ENCODE measurements at regions of chr10 and their contacts with region 1.

Region 1: GRCh38 chr10:72048450-72049124 is 39.8 kb downstream of the SPOCK2 start:
- DNase-seq: peak; percentile 94
- H3K4me3 ChIP-seq: no peak overlapping the region
- H3K27ac ChIP-seq: no peak overlapping the region
- H3K4me1 ChIP-seq: no peaks in the 10 kb centered on the region
- H3K27me3 ChIP-seq: no peaks in the 10 kb centered on the region
- CTCF ChIP-seq: peak; percentile 96 to 99
- POLR2A ChIP-seq: no peak

Region 2: DNA sequence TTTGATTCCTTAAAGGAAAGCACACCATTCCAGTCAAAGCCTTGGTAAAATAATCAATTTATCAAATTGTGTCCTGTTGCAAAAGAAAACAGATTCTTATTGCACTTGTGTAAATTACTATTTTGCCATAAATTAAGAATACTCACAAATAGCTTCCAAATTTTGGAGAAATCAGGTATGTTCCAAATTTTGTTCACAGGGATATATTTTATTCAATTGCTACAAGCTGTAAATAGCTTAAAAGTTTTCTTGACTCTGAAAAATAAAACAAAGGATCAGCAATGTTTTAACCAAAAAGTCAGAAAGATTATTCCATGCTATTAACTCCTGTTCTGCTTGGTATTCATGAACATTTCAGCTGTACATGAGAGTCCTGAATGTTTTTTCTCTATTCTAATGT is 131.8 kb before region 1 on chr10:
- CTCF ChIA-PET with region 1: interaction called, 25 read pairs
- POLR2A ChIA-PET with region 1: no interaction called
- dilution Hi-C with region 1: no loop called
- intact Hi-C with region 1: no loop called
- DNase-seq: no peak
- H3K4me3 ChIP-seq: no peak overlapping the region
- H3K27ac ChIP-seq: no peak overlapping the region
- H3K4me1 ChIP-seq: no peaks in the 10 kb centered on the region
- H3K27me3 ChIP-seq: no peaks in the 10 kb centered on the region
- CTCF ChIP-seq: no peak
- POLR2A ChIP-seq: no peak

Region 3: GRCh38 chr10:71985542-71986250 is 62.9 kb before region 1 on chr10:
- CTCF ChIA-PET with region 1: interaction called, 16 read pairs
- POLR2A ChIA-PET with region 1: no interaction called
- dilution Hi-C with region 1: no loop called
- intact Hi-C with region 1: no loop called
- DNase-seq: peak; percentile 81
- H3K4me3 ChIP-seq: no peak overlapping the region
- H3K27ac ChIP-seq: no peak overlapping the region
- H3K4me1 ChIP-seq: peaks cover 28% of the 10 kb centered on the region
- H3K27me3 ChIP-seq: no peaks in the 10 kb centered on the region
- CTCF ChIP-seq: no peak
- POLR2A ChIP-seq: no peak

Region 4: DNA sequence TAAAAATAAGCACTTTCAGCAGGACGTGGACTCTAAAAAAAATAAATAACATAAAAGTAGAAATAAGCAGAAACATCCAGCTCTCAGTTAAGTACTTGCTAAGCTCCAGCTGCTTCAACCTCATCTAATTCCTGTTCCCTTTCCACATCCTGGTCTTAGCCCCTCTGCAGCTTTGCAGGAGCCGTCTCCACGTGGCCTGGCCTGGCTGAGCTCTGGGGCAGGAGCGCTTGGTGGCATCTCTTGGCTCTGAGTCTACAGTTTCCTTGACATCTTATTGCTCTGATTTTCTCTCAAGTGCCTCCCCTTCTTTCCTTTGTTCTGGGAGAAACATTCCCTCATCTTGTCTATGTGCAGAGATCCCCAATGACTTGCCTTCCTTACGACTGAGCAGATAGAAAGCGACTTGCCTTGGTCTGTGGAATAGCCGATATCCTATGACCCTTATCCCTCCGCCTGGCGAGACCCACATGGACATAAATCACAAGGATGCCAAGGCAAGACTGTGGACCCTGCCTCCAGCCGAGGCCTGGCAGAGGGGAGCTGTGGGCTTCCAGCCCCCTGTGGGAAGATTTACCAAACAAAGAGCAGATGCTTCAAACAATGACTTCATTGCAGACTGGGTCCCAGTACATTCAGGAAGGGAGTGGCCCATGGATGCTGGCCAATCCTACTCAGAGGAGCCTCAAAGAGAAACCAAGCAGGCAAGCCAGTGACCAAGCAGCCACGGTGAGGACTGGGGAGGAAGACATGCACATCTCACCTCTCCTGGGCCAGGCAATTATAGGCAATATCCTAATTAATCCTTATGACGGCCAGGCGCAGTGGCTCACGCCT is 22.1 kb before region 1 on chr10:
- CTCF ChIA-PET with region 1: interaction called, 29 read pairs
- POLR2A ChIA-PET with region 1: no interaction called
- dilution Hi-C with region 1: no loop called
- intact Hi-C with region 1: no loop called
- DNase-seq: no peak
- H3K4me3 ChIP-seq: no peak overlapping the region
- H3K27ac ChIP-seq: no peak overlapping the region
- H3K4me1 ChIP-seq: peaks cover 1% of the 10 kb centered on the region
- H3K27me3 ChIP-seq: peaks cover 3 to 4% of the 10 kb centered on the region in 2 experiments
- CTCF ChIP-seq: no peak
- POLR2A ChIP-seq: no peak

Region 5: GRCh38 chr10:72079356-72079755 is 30.8 kb after region 1 on chr10:
- CTCF ChIA-PET with region 1: interaction called, 13 read pairs
- POLR2A ChIA-PET with region 1: no interaction called
- dilution Hi-C with region 1: no loop called
- intact Hi-C with region 1: no loop called
- DNase-seq: no peak
- H3K4me3 ChIP-seq: no peak overlapping the region
- H3K27ac ChIP-seq: no peak overlapping the region
- H3K4me1 ChIP-seq: no peaks in the 10 kb centered on the region
- H3K27me3 ChIP-seq: no peaks in the 10 kb centered on the region
- CTCF ChIP-seq: no peak
- POLR2A ChIP-seq: no peak

Region 6: DNA sequence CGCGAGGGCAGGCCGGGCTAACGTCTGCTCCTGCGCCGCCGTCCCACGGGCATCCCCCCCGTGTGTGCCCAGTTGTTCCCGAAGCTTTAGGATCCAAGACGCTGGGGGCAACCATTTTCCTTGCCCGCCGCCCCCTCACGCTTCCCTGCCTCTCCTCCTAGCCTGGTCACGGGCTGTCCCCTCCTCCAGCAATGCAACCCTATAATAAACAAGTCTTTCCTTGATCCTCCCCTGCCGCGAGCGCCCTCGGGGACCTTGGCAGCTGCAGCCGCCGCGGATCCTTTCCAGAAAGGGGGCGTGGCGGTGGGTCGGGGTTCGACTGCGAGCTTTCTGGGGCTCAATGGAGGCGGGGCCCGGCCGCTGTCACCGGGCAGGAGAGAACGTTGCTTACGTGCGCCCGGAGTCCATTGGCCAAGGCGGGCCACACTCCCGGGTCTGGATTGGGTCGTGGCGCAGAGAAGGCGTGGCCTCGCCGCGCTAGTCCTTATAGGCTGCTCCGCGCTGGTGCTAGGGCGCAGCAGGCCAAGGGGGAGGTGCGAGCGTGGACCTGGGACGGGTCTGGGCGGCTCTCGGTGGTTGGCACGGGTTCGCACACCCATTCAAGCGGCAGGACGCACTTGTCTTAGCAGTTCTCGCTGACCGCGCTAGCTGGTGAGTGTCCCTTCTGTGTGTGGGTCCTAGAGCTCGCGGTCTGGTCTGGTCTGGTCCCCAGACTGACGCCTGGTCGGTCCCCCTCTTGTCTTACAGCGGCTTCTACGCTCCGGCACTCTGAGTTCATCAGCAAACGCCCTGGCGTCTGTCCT is 225.0 kb after region 1 on chr10 and contains the start of gene DDIT4:
- CTCF ChIA-PET with region 1: interaction called, 10 read pairs
- POLR2A ChIA-PET with region 1: interaction called, 3 read pairs
- dilution Hi-C with region 1: no loop called
- intact Hi-C with region 1: no loop called
- DNase-seq: peak; percentile 99
- H3K4me3 ChIP-seq: peak within 1 kb of the TSS; percentile 37 to 68 (median 66)
- H3K27ac ChIP-seq: peak within 1 kb of the TSS; percentile 59
- H3K4me1 ChIP-seq: peaks cover 23% of the 10 kb centered on the region
- H3K27me3 ChIP-seq: no peaks in the 10 kb centered on the region
- CTCF ChIP-seq: no peak
- POLR2A ChIP-seq: peak; percentile 100
- total RNA-seq, gene DDIT4: 53.0 and 60.4 TPM in 2 replicates

Region 7: GRCh38 chr10:72625608-72626443 is 577.2 kb after region 1 on chr10 and contains the start of gene MICU1:
- CTCF ChIA-PET with region 1: no interaction called
- POLR2A ChIA-PET with region 1: no interaction called
- dilution Hi-C with region 1: no loop called
- intact Hi-C with region 1: no loop called
- DNase-seq: peak; percentile 97
- H3K4me3 ChIP-seq: peak within 1 kb of the TSS; percentile 60 to 92 (median 83)
- H3K27ac ChIP-seq: peak within 1 kb of the TSS; percentile 61
- H3K4me1 ChIP-seq: peaks cover 11% of the 10 kb centered on the region
- H3K27me3 ChIP-seq: no peaks in the 10 kb centered on the region
- CTCF ChIP-seq: no peak
- POLR2A ChIP-seq: peak; percentile 82
- total RNA-seq, gene MICU1: 42.3 and 48.0 TPM in 2 replicates

Region 8: GRCh38 chr10:72659694-72660093 is 611.1 kb after region 1 on chr10:
- CTCF ChIA-PET with region 1: no interaction called
- POLR2A ChIA-PET with region 1: no interaction called
- dilution Hi-C with region 1: no loop called
- intact Hi-C with region 1: no loop called
- DNase-seq: no peak
- H3K4me3 ChIP-seq: no peak overlapping the region
- H3K27ac ChIP-seq: no peak overlapping the region
- H3K4me1 ChIP-seq: no peaks in the 10 kb centered on the region
- H3K27me3 ChIP-seq: no peaks in the 10 kb centered on the region
- CTCF ChIP-seq: no peak
- POLR2A ChIP-seq: no peak

Region 9: GRCh38 chr10:72925951-72926465 is 877.4 kb after region 1 on chr10:
- CTCF ChIA-PET with region 1: no interaction called
- POLR2A ChIA-PET with region 1: no interaction called
- dilution Hi-C with region 1: no loop called
- intact Hi-C with region 1: no loop called
- DNase-seq: no peak
- H3K4me3 ChIP-seq: no peak overlapping the region
- H3K27ac ChIP-seq: no peak overlapping the region
- H3K4me1 ChIP-seq: no peaks in the 10 kb centered on the region
- H3K27me3 ChIP-seq: peaks cover 0 to 4% of the 10 kb centered on the region in 2 experiments
- CTCF ChIP-seq: no peak
- POLR2A ChIP-seq: no peak

Measured in endothelial cell of umbilical vein (primary cell).